Ascending aorta (tissue), 2 donors: ENCODE measurements at regions of chr9 and their contacts with region 1.

Region 1: DNA sequence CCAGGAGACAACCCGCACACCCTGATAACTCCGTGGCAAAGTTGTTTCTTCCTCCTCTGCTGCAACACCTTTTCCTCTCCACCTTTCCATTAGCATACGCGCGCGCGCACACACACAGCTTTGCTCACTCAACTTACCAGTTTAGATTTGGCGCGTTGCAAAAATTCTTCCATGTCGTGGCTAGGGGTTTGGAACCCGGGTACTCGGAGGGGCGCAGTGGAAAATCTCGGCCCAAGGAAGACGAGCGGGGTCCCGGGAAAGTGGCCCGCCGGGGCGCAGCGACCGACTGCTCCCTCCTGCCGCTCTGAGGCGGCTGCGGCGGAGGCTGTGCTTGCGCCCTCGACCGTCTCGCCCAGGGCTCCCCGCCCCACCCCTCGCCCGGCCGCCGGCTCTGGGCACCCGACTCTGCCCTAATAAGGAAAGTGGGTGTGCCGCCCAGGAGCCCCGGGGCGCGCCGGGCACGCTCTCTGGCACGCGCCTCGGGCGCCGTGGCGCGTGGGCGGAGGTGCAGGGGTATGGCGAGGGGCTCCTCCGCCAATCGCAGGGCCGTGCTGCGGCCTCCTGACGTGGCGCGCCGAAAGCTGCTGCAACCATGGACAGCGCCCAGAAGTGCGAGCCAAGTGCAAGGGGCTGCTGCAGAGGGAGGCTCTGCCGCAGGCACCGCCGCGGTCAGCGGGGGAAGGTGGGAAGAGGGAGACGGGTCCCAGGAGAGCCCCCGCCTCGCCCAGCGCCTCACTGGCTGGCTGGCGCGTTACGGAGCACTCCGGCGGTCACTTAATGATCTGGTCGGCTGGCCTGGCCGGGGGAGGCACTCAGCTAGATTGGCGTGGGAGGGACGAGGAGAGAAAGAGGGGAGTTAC is at the start of gene PRUNE2:
- DNase-seq: peak; percentile 72 to 95
- H3K4me3 ChIP-seq: peak within 1 kb of the TSS; percentile 70 to 87
- H3K27ac ChIP-seq: peak within 1 kb of the TSS; percentile 85 to 90
- H3K4me1 ChIP-seq: no peaks in the 10 kb centered on the region
- H3K27me3 ChIP-seq: no peaks in the 10 kb centered on the region
- CTCF ChIP-seq: peak in 1 of 3 experiments; percentile 6
- total RNA-seq, gene PRUNE2: 200 TPM

Region 2: GRCh38 chr9:76658535-76659231 is 247.3 kb before region 1 on chr9:
- intact Hi-C with region 1: loop called (anchors 10 kb)
- DNase-seq: no peak
- H3K4me3 ChIP-seq: no peak overlapping the region
- H3K27ac ChIP-seq: peak overlapping the region; percentile 5 to 6
- H3K4me1 ChIP-seq: peaks cover 0 to 30% of the 10 kb centered on the region in 2 donors
- H3K27me3 ChIP-seq: no peaks in the 10 kb centered on the region
- CTCF ChIP-seq: peak in 2 of 3 experiments; percentile 19 to 38

Region 3: DNA sequence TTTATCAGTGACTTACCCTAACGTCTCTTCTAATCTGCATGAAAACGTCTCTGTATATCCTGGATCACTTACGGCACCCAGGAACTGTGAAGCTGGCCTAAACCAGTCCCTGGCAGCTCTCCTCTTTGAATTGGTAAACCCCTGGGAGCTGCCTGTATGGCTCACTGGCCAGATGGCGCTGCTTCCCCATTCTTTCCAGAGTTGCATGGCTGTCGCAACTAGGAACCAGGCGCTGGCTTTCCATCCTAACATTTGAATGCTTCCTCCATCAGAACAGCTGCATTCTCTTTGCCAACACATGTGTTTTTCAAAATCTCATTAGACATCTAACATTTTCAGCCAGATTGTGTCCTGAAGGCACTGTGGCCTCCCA is 149.8 kb before region 1 on chr9:
- intact Hi-C with region 1: loop called (anchors 5 kb)
- DNase-seq: no peak
- H3K4me3 ChIP-seq: no peak overlapping the region
- H3K27ac ChIP-seq: no peak overlapping the region
- H3K4me1 ChIP-seq: peaks cover 0 to 3% of the 10 kb centered on the region in 2 donors
- H3K27me3 ChIP-seq: no peaks in the 10 kb centered on the region
- CTCF ChIP-seq: peak in 1 of 3 experiments; percentile 39

Region 4: GRCh38 chr9:76866689-76867088 is 39.3 kb before region 1 on chr9:
- intact Hi-C with region 1: loop called (anchors 5 kb)
- DNase-seq: peak in 1 of 2 donors; percentile 84
- H3K4me3 ChIP-seq: no peak overlapping the region
- H3K27ac ChIP-seq: peak overlapping the region; percentile 55 to 70
- H3K4me1 ChIP-seq: peaks cover 0 to 40% of the 10 kb centered on the region in 2 donors
- H3K27me3 ChIP-seq: no peaks in the 10 kb centered on the region
- CTCF ChIP-seq: no peak